Activated CD4-positive, alpha-beta T cell treated with anti-CD3 and anti-CD28 coated beads, Interleukin-2, amount 10 ng/mL, durations not matched to agents 24 days and 14 days (primary cell): ENCODE measurements at regions of chr5 and their contacts with region 1.

Region 1: DNA sequence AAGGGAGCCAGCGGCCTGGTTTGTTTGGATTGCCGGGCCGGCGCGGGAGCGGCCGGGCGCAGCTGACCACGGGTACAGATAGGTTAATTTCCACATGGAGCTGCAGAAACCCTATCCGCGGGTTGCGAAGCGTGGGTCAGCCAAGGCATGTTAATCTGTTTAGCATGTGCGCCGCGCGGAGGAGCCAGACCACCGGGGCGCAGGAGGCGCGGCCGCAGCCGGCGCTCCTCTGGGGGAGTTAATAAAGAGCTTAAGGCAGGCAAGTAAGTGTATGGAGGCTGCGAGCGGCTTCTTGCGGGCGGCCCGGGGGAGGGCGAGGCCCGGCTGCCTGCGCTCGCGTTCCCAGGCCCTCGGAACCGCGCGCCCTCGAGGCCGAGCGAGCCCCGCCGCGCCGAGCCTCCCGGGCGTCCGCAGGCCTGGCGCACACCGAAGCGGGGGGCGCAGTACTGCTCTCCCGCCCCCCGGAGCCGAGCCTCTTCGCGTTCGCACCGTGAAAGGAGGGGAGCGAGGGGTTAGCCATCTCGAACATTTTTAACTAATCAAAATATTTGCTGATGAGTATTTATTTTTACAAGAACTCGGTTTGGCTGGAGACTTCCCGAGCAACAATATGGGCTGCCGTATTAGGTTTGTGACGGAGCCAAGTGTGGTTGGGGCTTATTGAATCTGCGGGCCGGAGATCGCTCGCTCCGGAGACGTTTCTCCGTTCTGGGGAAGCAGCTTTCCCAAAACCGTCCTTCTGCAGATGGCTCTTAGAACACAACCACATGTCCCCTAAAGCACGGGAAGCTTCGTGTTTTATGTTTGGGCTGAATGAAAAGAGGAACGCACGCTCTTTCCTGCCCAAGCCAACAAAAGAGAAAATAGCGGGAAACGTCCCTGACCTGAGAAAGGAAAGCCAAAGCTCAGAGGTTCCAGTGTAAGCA is 28.8 kb downstream of the FOXD1 start:
- DNase-seq: no peak
- H3K4me3 Mint-ChIP-seq: no peak overlapping the region
- H3K27ac Mint-ChIP-seq: no peak overlapping the region
- H3K4me1 Mint-ChIP-seq: peaks cover 2% of the 10 kb centered on the region
- H3K27me3 Mint-ChIP-seq: peaks cover 86% of the 10 kb centered on the region

Region 2: GRCh38 chr5:73437101-73437776 is 17.5 kb after region 1 on chr5:
- intact Hi-C with region 1: loop called (anchors 2 kb)
- DNase-seq: no peak
- H3K4me3 Mint-ChIP-seq: no peak overlapping the region
- H3K27ac Mint-ChIP-seq: no peak overlapping the region
- H3K4me1 Mint-ChIP-seq: peaks cover 6% of the 10 kb centered on the region
- H3K27me3 Mint-ChIP-seq: peaks cover 82% of the 10 kb centered on the region